ENCODE measurements at regions of chr21 and their contacts with region 1.

Region 1: DNA sequence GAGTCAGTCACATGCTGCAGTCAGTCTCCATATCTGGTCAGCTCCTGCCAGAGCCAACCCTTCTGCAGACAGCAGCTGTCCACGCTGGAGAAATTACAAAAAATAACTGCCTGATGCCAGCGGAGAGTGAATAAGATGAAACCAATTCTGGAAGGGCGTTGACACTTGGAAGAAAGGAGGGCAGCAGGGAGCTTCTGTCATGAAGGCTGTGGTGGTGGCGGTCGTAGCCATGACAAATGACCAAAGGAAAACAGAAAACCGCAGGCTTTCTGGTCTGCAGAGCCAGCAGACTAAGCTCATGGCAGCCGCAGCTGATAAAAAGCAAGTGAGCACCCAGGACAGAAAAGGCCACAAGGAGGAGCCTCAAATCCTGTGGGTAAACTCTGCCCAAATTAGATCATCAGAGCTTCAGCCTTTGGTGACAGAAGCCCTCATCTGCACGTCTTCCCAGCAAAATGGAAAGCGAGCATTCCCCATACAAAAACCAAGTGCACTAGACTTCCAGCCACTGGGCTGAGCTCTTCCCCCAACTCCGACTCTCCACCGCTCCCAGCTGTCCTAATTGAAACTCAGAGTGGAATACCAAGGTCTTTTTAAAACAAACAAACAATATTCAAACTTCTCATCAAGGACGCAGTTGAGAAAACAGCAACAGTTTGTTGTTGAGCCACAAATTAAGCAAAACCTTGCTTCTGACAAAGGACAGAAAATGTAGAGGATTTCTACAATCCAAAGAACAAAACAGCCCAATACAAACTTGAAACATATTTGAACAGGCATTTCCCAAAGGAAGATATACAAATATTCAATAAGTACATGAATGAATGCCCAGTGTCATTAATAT is 28.7 kb downstream of the RSPH1 start:
- H3K4me3 Mint-ChIP-seq: no peak overlapping the region
- H3K27ac Mint-ChIP-seq: no peak overlapping the region
- H3K4me1 Mint-ChIP-seq: peaks cover 45% of the 10 kb centered on the region
- H3K27me3 Mint-ChIP-seq: peaks cover 38% of the 10 kb centered on the region

Region 2: DNA sequence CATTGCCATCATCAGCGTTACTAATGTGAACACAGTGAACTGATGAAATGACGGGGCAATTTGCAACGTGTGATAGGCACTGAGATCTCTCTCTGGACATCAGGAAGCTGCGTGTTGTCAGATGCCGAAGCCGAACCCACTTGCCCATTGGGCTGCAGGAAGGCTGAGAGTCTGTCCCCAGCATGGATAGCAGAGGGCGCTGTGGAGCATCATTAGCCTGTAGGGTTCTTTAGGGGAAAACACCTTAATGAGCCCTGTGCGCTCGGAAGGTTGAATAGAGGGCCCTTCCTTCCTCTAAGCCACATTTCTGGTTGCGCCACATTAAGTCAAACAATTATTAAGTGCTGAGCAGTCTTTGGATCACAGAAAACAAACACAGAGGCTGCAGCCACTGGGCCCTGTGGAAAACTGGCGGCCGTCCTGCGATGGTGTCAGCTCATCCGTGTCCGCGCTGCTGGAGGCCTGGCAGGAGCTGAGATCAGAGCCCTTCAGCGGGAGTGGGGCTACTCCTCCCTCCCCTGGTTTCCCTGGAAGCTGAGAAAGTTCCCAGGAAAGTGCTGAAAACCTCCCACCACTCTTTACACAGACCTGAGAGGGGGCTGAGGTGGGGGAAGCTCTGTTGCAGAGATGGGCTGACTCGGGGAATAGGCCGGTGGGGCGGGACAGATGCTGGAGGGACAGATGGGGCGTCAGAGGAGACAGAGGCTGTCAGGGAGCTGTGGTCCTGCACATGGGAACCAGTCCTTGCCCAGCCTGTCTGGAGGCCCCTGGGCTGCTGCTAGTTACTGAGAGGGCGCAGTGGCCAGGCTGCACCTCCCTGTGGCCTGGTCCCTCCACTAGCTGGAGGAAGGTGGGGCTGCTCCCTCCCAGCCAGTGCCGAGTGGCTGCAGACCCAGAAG is 129.3 kb before region 1 on chr21:
- intact Hi-C with region 1: no loop called
- H3K4me3 Mint-ChIP-seq: no peak overlapping the region
- H3K27ac Mint-ChIP-seq: no peak overlapping the region
- H3K4me1 Mint-ChIP-seq: peaks cover 5% of the 10 kb centered on the region
- H3K27me3 Mint-ChIP-seq: peaks cover 15% of the 10 kb centered on the region

Region 3: GRCh38 chr21:42513985-42514882 is 46.9 kb after region 1 on chr21:
- intact Hi-C with region 1: loop called (anchors 5 kb)
- H3K4me3 Mint-ChIP-seq: peak overlapping the region; percentile 84
- H3K27ac Mint-ChIP-seq: peak overlapping the region; percentile 77
- H3K4me1 Mint-ChIP-seq: peaks cover 16% of the 10 kb centered on the region
- H3K27me3 Mint-ChIP-seq: peaks cover 12% of the 10 kb centered on the region